ENCODE measurements at regions of chr9 and their contacts with region 1.

Region 1: DNA sequence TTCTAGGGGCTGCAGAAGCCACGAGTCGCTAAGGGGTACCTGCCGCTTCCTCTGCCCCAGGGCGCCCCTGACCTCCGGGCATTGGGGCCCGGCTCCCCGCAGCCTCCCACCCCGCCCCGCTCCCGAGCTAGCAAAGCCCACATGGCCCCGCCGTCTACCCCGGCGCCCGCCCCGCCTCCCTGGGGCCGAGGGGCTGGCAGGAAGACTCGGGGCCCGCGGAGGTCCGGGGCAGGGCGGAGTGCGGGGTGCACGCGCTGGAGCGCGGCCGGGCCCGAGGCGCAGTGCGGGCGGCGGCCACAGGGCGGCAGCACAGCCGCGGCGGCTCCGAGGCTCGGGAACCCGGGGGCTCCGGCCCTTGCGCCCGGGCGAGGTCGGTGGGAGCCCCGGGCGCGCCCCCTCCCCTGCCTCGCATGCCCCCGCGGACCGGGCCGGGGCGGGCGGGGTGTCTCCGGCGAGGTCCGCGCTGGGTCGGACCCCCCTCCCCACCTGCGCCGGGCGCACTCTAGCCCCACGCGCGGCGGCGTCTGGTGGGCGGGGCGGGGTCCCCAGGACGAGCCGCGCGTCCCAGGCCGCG is 6.7 kb downstream of the NRARP start:
- DNase-seq: peak in 2 of 5 donors; percentile 37 to 58
- H3K4me3 ChIP-seq: peak overlapping the region; percentile 16
- H3K27ac ChIP-seq: no peak overlapping the region
- H3K4me1 ChIP-seq: peaks cover 5% of the 10 kb centered on the region
- H3K27me3 ChIP-seq: peaks cover 8% of the 10 kb centered on the region
- CTCF ChIP-seq: peak in 2 of 3 donors; percentile 66 to 71
- EP300 ChIP-seq: no peak
- POLR2A ChIP-seq: no peak

Region 2: GRCh38 chr9:137406876-137407589 is 111.7 kb after region 1 on chr9:
- intact Hi-C with region 1: loop called in 3 of 4 experiments (anchors 5 kb)
- DNase-seq: peak; percentile 58 to 83 (median 74)
- H3K4me3 ChIP-seq: peak overlapping the region; percentile 33
- H3K27ac ChIP-seq: peak overlapping the region; percentile 56 to 66
- H3K4me1 ChIP-seq: peaks cover 14% of the 10 kb centered on the region
- H3K27me3 ChIP-seq: no peaks in the 10 kb centered on the region
- CTCF ChIP-seq: peak; percentile 35 to 87 (median 71)
- EP300 ChIP-seq: no peak
- POLR2A ChIP-seq: no peak

Region 3: DNA sequence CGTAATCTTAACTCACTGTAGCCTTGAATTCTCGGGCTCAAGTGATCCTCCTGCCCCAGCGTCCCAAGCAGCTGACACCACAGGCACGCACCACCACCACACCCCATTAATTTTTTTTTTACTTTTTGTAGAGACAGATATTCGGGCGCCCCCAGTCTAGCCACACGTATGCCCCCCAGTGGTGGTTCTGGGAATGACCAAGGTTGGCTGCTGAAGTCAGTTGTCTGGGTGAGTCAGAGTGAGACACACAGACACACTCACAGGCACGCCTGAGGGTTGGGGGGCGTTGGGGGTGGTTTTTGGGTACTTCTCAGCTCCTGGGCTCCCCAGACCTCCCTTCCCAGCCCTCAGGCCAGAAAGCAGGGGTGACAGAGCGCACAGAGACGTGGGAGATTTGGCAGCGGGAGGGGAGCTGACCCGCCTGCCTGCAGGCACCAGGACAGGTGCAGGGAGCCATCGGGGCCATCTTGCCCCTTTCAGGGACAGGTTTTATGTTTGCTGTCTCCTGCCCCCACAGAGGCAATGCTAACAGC is 150.0 kb after region 1 on chr9:
- intact Hi-C with region 1: loop called in 2 of 4 experiments (anchors 5 to 10 kb)
- DNase-seq: peak; percentile 66 to 85 (median 83)
- H3K4me3 ChIP-seq: no peak overlapping the region
- H3K27ac ChIP-seq: no peak overlapping the region
- H3K4me1 ChIP-seq: no peaks in the 10 kb centered on the region
- H3K27me3 ChIP-seq: no peaks in the 10 kb centered on the region
- CTCF ChIP-seq: peak; percentile 43 to 68 (median 54)
- EP300 ChIP-seq: no peak
- POLR2A ChIP-seq: no peak

Region 4: GRCh38 chr9:137521405-137521985 is 226.2 kb after region 1 on chr9:
- intact Hi-C with region 1: loop called in 3 of 4 experiments (anchors 5 to 10 kb)
- DNase-seq: no peak
- H3K4me3 ChIP-seq: no peak overlapping the region
- H3K27ac ChIP-seq: no peak overlapping the region
- H3K4me1 ChIP-seq: no peaks in the 10 kb centered on the region
- H3K27me3 ChIP-seq: no peaks in the 10 kb centered on the region
- CTCF ChIP-seq: no peak
- EP300 ChIP-seq: no peak
- POLR2A ChIP-seq: no peak

Measured in ovary (tissue), 10 donors.